Psoas muscle (tissue), 8 donors: ENCODE measurements at regions of chr2 and their contacts with region 1.

Region 1: GRCh38 chr2:127566576-127566975 is 31.1 kb downstream of the MYO7B start:
- DNase-seq: no peak
- ATAC-seq: no peak
- H3K4me3 ChIP-seq: no peak overlapping the region
- H3K27ac ChIP-seq: no peak overlapping the region
- H3K4me1 ChIP-seq: peaks cover 34% of the 10 kb centered on the region
- H3K27me3 ChIP-seq: no peaks in the 10 kb centered on the region
- CTCF ChIP-seq: no peak

Region 2: DNA sequence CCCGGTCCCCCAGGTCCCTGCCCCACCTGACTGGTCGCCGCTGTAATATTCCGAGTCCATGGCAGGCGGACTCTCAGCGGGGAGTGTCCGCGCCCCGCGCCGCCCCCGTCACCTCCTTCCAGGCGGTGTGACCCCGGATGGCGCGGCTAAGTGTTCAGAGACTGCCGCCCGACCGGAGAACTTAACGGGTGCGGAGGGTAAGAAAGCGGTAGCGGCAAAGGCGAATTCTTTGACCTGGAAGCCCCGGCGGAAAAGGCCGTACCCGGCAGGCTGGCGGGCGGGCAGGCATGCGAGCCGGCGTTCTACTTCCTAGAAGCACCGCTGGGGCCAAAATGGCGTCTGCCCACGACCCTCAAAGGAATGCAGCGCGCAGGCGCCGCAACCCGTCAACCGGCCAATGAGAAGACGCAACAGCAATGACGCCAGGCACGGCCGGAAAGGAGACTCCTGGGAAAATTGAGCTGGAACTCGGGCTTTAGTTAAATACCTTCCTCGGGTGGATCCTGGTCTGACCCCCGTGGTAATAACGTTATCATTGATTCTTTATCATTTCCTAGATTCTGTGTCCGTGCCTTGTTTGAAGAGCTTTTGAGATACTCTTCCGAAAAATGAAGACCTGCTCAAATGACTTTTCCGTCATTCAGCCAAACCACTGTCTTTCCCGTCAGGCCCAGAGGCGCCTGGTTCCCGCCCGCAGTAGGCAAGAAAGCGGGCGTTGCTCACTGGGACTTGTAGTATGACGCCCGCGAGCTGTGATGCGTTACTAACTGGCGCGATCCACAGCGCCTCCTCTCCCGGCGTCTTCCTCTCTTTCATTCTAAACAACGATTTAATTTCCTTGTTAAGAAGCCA is 40.2 kb before region 1 on chr2 and contains the start of gene IWS1:
- intact Hi-C with region 1: loop called (anchors 5 kb)
- DNase-seq: peak; percentile 96 to 98
- ATAC-seq: peak; percentile 94 to 97 (median 94)
- H3K4me3 ChIP-seq: peak within 1 kb of the TSS; percentile 79
- H3K27ac ChIP-seq: peak within 1 kb of the TSS; percentile 92
- H3K4me1 ChIP-seq: peaks cover 15% of the 10 kb centered on the region
- H3K27me3 ChIP-seq: no peaks in the 10 kb centered on the region
- CTCF ChIP-seq: peak; percentile 36
- total RNA-seq, gene IWS1: 54.2 to 69.0 (median 62.7) TPM

Region 3: DNA sequence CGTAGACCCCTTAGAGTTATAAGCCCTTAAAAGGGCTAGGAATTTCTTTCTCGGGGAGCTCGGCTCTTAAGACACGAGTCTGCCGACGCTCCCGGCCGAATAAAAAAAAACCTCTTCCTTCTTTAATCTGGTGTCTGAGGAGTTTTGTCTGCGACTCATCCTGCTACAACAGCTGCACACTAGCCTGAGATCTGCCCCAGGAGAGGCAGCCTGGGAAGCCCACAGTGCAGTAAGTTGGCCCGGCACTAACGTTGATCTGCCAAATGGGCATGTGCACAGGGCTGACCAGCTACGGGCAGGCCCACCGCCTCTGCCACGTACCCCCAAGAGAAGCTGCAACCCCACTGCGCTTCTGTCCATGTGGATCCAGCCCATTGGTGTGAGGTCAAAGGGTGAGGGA is 117.2 kb after region 1 on chr2:
- intact Hi-C with region 1: no loop called
- DNase-seq: peak in 1 of 2 donors; percentile 64
- ATAC-seq: no peak
- H3K4me3 ChIP-seq: no peak overlapping the region
- H3K27ac ChIP-seq: no peak overlapping the region
- H3K4me1 ChIP-seq: peaks cover 6% of the 10 kb centered on the region
- H3K27me3 ChIP-seq: no peaks in the 10 kb centered on the region
- CTCF ChIP-seq: no peak